ENCODE measurements at regions of chr10 and their contacts with region 1.

Region 1: DNA sequence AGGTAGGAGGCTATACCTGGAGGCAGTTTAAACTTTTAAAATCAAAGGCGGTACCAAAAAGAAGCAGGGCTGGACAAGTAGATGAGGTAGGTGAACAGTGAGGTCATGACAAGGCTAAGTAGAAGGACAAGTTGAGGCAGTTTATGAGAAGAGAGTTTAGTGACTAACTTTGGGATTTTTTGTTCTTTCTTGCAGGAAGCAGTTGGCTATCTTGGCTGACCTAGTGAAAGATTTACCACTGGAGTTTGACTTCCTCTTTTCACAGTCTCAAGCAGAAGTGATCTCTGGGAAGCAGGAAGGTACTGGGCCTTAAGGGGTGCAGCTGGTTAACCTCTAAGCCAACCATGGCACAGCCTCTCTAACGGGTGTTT is 26.3 kb downstream of the ENTPD7 start:
- DNase-seq: no peak
- ATAC-seq: no peak
- H3K4me3 ChIP-seq: no peak overlapping the region
- H3K27ac ChIP-seq: no peak overlapping the region
- H3K4me1 ChIP-seq: peaks cover 17% of the 10 kb centered on the region
- H3K27me3 ChIP-seq: no peaks in the 10 kb centered on the region
- CTCF ChIP-seq: no peak

Region 2: DNA sequence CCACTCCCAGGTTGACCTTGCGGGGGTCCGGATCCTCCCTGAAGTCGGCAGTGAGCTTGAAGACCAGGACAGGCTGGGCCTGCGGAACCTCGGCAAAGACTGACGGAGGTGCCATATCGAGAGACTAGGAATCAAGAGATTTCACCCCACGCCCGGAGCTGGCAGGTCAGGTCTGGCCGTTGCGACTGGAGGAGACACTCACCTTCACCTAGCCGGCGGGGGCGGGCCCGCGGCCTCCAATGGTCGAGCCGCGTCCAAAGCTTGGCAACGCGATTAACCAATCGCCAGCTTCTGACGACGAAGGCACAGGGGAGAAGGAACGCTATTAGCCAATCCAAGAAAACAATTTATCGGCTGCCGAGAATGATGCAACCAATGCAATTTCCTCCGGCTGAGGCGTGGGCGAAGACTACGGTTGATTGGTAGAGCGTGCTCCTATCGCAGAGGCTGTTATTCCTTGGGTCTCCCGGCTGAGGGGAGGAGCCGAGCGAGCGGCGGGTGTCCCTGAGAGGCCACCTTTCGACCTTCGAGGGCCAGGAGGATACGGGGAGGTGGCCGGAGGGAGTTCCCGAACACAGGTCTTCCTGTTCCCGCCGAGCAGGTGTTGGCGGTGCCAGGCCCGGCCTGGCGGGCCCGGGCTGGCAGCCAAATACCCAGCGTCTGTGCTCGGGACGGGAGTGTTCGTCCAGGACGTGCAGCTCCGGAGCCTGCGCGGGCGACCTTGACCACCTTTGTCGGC is 255.0 kb before region 1 on chr10 and contains the start of gene GOT1:
- CTCF ChIA-PET with region 1: no interaction called
- POLR2A ChIA-PET with region 1: no interaction called
- intact Hi-C with region 1: loop called (anchors 10 kb)
- DNase-seq: peak; percentile 98
- ATAC-seq: peak; percentile 96
- H3K4me3 ChIP-seq: peak within 1 kb of the TSS; percentile 98
- H3K27ac ChIP-seq: peak within 1 kb of the TSS; percentile 66
- H3K4me1 ChIP-seq: peaks cover 6% of the 10 kb centered on the region
- H3K27me3 ChIP-seq: no peaks in the 10 kb centered on the region
- CTCF ChIP-seq: no peak
- total RNA-seq, gene GOT1: 27.4 and 32.6 TPM in 2 replicates

Region 3: DNA sequence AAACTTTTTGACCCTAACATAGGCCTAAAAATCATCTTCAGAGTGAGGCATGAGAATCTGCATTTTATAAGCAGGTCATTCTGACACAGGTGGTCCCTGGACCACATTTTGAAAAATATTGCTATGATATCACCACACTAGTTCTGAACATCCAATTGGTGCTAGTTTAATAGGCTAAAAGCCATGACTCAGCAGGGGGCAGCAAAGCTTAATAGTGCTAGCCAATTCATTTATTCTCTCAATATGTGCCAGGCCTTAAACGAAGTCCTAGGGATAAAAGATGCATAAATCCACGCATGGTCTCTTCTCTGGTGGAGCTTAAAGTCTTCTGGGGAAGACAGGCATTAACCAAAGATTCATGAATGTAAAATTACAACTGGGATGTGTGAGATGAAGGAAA is 55.1 kb before region 1 on chr10:
- CTCF ChIA-PET with region 1: interaction called, 3 read pairs
- POLR2A ChIA-PET with region 1: no interaction called
- intact Hi-C with region 1: loop called (anchors 1 kb)
- DNase-seq: peak; percentile 53
- ATAC-seq: peak; percentile 77
- H3K4me3 ChIP-seq: no peak overlapping the region
- H3K27ac ChIP-seq: no peak overlapping the region
- H3K4me1 ChIP-seq: no peaks in the 10 kb centered on the region
- H3K27me3 ChIP-seq: no peaks in the 10 kb centered on the region
- CTCF ChIP-seq: peak; percentile 64

Region 4: DNA sequence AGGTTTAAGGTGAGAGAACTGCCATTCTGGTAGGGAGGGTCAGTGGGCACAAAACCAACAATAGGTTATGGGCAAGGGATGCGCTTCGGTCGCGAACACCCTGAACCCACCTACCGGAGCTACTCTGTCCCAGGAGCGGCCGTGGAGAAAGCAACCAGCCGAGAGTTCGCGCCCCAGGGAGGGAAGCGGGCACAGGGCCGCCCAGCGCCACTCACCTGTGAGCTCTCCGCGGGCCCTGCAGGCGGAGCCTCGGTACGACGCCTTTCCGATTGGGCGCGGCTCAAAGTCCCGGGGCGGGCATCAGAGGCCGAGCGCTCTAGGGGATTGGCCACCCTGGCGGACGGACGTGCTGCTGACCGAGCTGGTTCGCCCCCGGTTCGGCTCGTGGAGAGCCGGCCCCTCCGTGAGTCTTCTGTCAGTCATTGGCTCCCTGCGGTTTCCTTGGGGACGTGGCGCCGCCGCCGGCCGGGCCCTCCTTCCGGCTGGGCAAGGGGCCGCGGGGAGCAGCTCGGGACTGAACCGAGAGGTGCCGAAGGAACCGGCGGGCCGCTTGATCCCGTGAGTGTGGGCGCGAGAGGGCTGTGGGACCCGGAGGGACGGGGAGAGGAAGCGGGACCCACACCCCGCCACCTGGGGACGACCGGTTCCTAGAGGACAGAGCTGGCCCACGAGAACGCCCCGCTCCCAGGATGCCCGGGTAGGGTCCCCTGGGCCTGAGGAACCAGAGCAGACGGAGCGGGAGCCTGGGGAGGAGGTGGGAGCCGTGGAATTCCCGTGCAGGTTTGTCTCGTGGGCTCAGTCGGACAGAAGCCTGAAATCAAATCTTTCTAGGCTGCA is 26.3 kb before region 1 on chr10 and contains the start of gene ENTPD7:
- CTCF ChIA-PET with region 1: no interaction called
- POLR2A ChIA-PET with region 1: no interaction called
- intact Hi-C with region 1: loop called (anchors 2 kb)
- DNase-seq: peak; percentile 91
- ATAC-seq: peak; percentile 94
- H3K4me3 ChIP-seq: peak within 1 kb of the TSS; percentile 91
- H3K27ac ChIP-seq: no peak within 1 kb of the TSS
- H3K4me1 ChIP-seq: peaks cover 24% of the 10 kb centered on the region
- H3K27me3 ChIP-seq: no peaks in the 10 kb centered on the region
- CTCF ChIP-seq: no peak
- total RNA-seq, gene ENTPD7: 6.8 and 7.8 TPM in 2 replicates